A673 (cell line): ENCODE measurements at regions of chr5 and their contacts with region 1.

Region 1: GRCh38 chr5:15003511-15003920 is 131.9 kb upstream of the ANKH start:
- DNase-seq: peak; percentile 79
- H3K4me3 ChIP-seq: no peak overlapping the region
- H3K27ac ChIP-seq: no peak overlapping the region
- H3K4me1 ChIP-seq: no peaks in the 10 kb centered on the region
- H3K27me3 ChIP-seq: peaks cover 16% of the 10 kb centered on the region
- CTCF ChIP-seq: peak; percentile 85

Region 2: DNA sequence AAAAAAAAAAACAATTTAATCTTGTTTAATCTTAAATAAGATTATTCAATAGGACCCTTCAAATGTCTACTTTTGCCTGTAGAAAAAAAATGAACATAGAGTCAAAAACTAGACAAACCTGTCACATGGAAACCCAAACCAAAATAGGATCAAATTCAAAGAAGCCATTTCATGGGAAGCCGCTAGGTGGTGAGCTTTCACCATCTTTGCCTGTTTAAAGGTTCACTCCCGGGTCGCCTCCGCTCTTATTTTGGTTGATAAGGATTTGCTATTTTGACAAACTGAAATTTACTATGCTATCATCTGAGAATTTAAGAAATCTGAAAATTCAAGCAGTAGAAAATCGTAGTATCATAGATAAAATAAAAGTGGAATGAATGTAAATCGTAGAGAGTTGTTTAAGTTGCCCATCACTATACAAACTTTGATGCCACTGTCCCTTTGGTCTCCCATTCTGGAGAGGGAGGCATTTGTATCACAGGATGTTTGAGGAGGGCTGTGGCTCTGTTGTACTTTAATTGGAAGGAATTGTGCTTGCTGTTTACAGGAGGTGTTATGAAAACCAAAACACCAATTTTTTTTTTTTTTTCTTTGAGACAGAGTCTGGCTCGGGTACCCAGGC is 1015.6 kb before region 1 on chr5:
- CTCF ChIA-PET with region 1: no interaction called
- POLR2A ChIA-PET with region 1: interaction called, 7 read pairs
- intact Hi-C with region 1: loop called (anchors 10 kb)
- DNase-seq: peak; percentile 71
- H3K4me3 ChIP-seq: no peak overlapping the region
- H3K27ac ChIP-seq: no peak overlapping the region
- H3K4me1 ChIP-seq: no peaks in the 10 kb centered on the region
- H3K27me3 ChIP-seq: peaks cover 9% of the 10 kb centered on the region
- CTCF ChIP-seq: peak; percentile 85

Region 3: GRCh38 chr5:14685757-14686156 is 317.8 kb before region 1 on chr5:
- CTCF ChIA-PET with region 1: interaction called, 6 read pairs
- POLR2A ChIA-PET with region 1: no interaction called
- intact Hi-C with region 1: loop called (anchors 2 kb)
- DNase-seq: peak; percentile 69
- H3K4me3 ChIP-seq: no peak overlapping the region
- H3K27ac ChIP-seq: no peak overlapping the region
- H3K4me1 ChIP-seq: no peaks in the 10 kb centered on the region
- H3K27me3 ChIP-seq: no peaks in the 10 kb centered on the region
- CTCF ChIP-seq: peak; percentile 69

Region 4: DNA sequence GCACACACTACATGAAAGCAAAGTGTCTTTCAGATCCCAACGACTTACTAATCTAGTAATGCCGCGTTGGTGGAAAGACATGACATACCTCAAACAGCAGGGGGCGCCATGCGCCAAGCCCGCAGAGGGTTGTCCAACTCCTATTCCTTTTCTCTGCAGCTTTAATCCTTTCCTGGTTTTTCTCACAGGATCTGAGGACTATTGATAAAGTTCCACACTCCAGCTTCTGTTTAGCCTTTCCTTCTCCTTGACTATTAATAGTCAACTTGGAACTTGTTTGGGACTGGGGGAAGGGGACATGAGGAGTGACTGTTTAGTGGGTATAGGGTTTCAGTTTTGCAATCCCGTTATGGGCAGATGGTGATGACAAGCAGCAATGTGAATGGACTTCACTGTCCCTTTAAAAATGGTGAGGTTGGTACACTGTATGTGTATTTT is 276.1 kb before region 1 on chr5:
- CTCF ChIA-PET with region 1: interaction called, 6 read pairs
- POLR2A ChIA-PET with region 1: no interaction called
- intact Hi-C with region 1: loop called (anchors 1 kb)
- DNase-seq: peak; percentile 83
- H3K4me3 ChIP-seq: no peak overlapping the region
- H3K27ac ChIP-seq: no peak overlapping the region
- H3K4me1 ChIP-seq: no peaks in the 10 kb centered on the region
- H3K27me3 ChIP-seq: no peaks in the 10 kb centered on the region
- CTCF ChIP-seq: peak; percentile 93

Region 5: DNA sequence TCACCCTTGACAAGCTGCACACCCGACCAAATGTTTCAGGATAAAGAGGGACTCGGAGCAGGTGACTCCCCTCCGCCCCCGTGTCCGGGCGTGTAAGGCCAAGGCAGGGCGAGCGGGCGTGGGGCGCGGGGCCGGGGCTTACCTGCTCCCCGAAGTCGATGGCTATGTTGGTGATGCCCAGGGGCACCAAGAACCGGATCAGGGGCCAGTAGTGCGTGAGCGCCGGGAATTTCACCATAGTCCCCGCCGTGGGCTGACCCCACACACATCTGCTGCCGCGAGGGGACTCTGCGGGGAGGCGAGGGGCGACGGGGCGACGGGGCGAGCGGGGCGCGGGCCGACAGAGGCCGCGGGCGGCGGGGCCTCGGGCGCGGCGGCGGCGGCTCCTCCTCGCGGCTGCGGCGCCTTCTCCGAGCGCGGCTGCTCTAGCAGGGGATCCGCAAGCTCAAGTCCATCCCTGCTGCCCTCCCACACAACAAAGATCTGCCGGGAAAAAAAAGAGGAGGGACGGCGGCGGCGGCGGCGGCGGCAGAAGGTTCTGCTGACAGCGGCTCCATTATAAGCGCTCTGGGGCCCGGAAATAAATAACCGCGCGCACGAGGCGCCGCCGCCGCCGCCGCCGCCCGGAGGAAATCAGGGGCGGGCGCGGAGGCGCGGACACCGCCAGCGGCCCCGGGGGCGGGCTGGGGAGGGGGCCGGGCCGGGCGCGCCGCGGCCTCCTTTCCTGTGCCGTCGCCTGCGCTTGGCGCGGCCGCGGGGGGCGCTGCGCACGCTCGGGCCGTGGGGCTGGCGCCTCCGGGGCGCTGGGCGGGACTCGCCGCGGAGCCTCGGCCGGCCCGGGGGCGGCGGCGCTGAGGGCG is 132.1 kb before region 1 on chr5 and contains the start of gene ANKH:
- CTCF ChIA-PET with region 1: no interaction called
- POLR2A ChIA-PET with region 1: no interaction called
- intact Hi-C with region 1: loop called (anchors 5 kb)
- DNase-seq: peak; percentile 82
- H3K4me3 ChIP-seq: peak within 1 kb of the TSS; percentile 51
- H3K27ac ChIP-seq: no peak within 1 kb of the TSS
- H3K4me1 ChIP-seq: peaks cover 5% of the 10 kb centered on the region
- H3K27me3 ChIP-seq: peaks cover 55% of the 10 kb centered on the region
- CTCF ChIP-seq: no peak
- total RNA-seq, gene ANKH: 8.8 and 13.9 TPM in 2 replicates

Region 6: GRCh38 chr5:14946815-14947640 is 56.5 kb before region 1 on chr5:
- CTCF ChIA-PET with region 1: no interaction called
- POLR2A ChIA-PET with region 1: no interaction called
- intact Hi-C with region 1: loop called (anchors 5 kb)
- DNase-seq: peak; percentile 45
- H3K4me3 ChIP-seq: no peak overlapping the region
- H3K27ac ChIP-seq: no peak overlapping the region
- H3K4me1 ChIP-seq: no peaks in the 10 kb centered on the region
- H3K27me3 ChIP-seq: no peaks in the 10 kb centered on the region
- CTCF ChIP-seq: peak; percentile 50